Dendritic cell treated with granulocyte-macrophage colony-stimulating factor and Interleukin-4, amounts not matched to agents 40 ng/mL and 50 ng/mL, for 4 days (primary cell): ENCODE measurements at regions of chr10 and their contacts with region 1.

Region 1: DNA sequence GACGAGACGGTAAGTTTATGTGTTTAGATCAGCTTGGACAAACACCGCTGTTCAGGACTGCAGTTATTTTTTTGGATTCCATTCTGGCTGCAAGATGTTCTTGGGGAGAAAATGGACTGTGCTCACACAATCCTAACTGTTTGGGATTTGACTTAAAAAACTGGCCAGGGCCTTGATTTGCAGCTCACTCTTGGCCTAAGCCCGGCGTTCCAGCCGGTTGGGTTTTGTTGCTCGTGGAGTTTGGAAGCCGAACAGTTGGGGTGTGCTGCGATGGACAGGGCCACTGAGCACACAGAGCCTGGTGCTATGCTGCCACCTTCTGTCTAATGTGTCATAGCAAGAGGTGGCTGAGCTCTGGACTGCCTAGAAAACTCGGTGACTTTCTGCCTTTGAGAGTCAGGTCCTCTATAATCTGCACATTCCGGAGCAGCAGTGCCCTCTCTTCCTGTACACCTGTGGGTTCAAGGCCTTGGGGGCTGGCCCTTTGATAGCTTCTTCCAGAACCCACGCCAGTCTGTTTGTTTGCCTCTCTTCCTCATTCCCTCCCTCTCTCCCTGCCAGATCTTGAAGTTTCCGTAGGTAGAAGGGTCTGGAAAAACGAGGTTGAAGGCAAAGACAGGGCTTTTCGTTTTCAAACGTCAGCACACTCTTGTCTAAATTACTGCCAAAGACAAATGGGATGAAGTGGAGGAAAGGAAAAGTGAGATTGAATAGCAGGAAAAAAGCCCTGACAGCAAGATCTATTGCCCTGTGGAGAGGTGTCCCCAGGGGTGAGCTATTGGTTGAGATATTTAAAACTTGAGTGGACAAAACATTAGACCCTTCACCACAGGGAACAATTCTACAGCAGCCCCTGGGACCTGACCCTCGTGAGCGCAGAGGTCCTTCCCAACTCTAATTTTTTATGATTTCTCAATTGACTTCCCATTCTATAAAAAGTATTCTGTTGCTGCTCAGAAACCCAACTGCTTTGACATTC is 167.5 kb upstream of the HABP2 start:
- H3K4me3 Mint-ChIP-seq: no peak overlapping the region
- H3K27ac Mint-ChIP-seq: no peak overlapping the region
- H3K4me1 Mint-ChIP-seq: peaks cover 25% of the 10 kb centered on the region
- H3K27me3 Mint-ChIP-seq: peaks cover 50% of the 10 kb centered on the region

Region 2: GRCh38 chr10:112475575-112476218 is 909.6 kb before region 1 on chr10:
- intact Hi-C with region 1: loop called (anchors 5 kb)
- H3K4me3 Mint-ChIP-seq: no peak overlapping the region
- H3K27ac Mint-ChIP-seq: no peak overlapping the region
- H3K4me1 Mint-ChIP-seq: peaks cover 6% of the 10 kb centered on the region
- H3K27me3 Mint-ChIP-seq: no peaks in the 10 kb centered on the region

Region 3: GRCh38 chr10:112565434-112566053 is 819.8 kb before region 1 on chr10:
- intact Hi-C with region 1: loop called (anchors 2 kb)
- H3K4me3 Mint-ChIP-seq: no peak overlapping the region
- H3K27ac Mint-ChIP-seq: no peak overlapping the region
- H3K4me1 Mint-ChIP-seq: no peaks in the 10 kb centered on the region
- H3K27me3 Mint-ChIP-seq: no peaks in the 10 kb centered on the region

Region 4: DNA sequence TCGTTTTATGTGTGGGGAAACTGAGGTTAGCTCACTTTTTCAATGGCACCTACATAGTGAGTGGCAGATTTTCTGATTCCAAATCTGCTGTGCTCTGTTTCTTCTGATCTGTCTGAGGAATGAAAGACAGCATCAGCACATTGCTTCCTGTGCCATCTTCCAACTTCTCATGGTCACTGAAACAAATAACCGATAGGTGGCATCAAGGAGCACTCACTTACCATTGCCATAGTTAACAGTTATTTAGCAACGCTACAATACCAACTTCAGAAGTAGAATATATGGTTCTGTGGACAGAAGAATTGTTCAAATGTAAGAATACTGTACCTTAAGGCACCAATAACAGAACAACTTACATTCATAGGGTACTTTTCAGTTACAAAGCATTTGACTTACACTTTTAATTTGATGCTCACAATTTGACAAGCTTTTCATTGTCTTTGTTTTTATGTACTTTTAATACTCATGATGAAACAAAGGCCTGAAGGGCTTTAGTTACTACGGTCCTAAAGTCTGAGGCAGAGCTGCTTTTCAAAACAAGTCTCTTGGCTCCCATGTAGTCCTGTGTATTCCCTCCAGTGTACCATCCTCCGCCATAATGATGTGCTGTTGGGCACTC is 664.1 kb before region 1 on chr10:
- intact Hi-C with region 1: loop called (anchors 1 kb)
- H3K4me3 Mint-ChIP-seq: no peak overlapping the region
- H3K27ac Mint-ChIP-seq: no peak overlapping the region
- H3K4me1 Mint-ChIP-seq: no peaks in the 10 kb centered on the region
- H3K27me3 Mint-ChIP-seq: no peaks in the 10 kb centered on the region

Region 5: DNA sequence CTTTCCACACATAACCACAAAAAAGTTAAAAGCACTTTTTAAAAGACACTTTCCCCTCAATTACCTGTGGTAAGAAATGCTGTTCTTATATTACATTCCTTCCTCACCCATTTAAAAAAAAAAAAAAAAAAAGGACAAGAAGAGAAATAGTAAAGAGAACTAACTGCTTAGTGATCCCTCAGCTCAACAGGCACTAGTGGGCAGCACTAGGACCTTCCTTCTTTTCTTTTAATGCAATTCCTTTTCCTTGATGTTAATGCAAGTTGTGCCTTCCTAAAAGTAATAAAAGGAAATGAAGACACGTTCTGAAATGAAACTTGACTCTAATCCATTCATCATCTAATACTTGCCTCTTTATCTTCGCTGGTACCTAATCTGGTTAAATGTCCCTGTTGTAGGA is 245.6 kb before region 1 on chr10:
- intact Hi-C with region 1: loop called (anchors 5 kb)
- H3K4me3 Mint-ChIP-seq: no peak overlapping the region
- H3K27ac Mint-ChIP-seq: no peak overlapping the region
- H3K4me1 Mint-ChIP-seq: peaks cover 25% of the 10 kb centered on the region
- H3K27me3 Mint-ChIP-seq: peaks cover 52% of the 10 kb centered on the region

Region 6: GRCh38 chr10:113273181-113274163 is 111.8 kb before region 1 on chr10:
- intact Hi-C with region 1: no loop called
- H3K4me3 Mint-ChIP-seq: peak overlapping the region; percentile 54
- H3K27ac Mint-ChIP-seq: peak overlapping the region; percentile 75
- H3K4me1 Mint-ChIP-seq: peaks cover 44% of the 10 kb centered on the region
- H3K27me3 Mint-ChIP-seq: peaks cover 45% of the 10 kb centered on the region

Region 7: DNA sequence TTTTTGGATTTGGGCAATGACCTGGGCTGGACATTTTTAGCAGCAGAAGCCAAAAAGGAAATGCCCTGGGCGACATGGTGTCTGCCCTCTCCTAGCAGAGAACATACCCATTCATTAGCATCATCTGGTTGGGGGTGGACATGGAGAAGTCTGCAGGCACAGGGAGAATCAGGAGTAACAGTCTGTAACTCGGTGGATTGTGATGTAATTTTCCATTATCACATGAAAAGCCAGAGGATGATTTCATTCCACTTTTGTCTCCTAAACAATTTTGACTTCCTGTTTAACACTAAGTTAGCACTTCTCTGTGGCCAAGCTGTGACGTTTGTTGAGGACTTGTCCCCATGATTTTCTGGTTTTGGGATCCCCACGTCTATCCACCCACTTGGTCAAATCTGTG is 13.8 kb after region 1 on chr10:
- intact Hi-C with region 1: no loop called
- H3K4me3 Mint-ChIP-seq: no peak overlapping the region
- H3K27ac Mint-ChIP-seq: no peak overlapping the region
- H3K4me1 Mint-ChIP-seq: peaks cover 11% of the 10 kb centered on the region
- H3K27me3 Mint-ChIP-seq: peaks cover 19% of the 10 kb centered on the region

Region 8: GRCh38 chr10:113521123-113521795 is 135.9 kb after region 1 on chr10:
- intact Hi-C with region 1: loop called (anchors 5 kb)
- H3K4me3 Mint-ChIP-seq: no peak overlapping the region
- H3K27ac Mint-ChIP-seq: no peak overlapping the region
- H3K4me1 Mint-ChIP-seq: no peaks in the 10 kb centered on the region
- H3K27me3 Mint-ChIP-seq: peaks cover 24% of the 10 kb centered on the region

Region 9: GRCh38 chr10:113678690-113679462 is 293.6 kb after region 1 on chr10:
- intact Hi-C with region 1: no loop called
- H3K4me3 Mint-ChIP-seq: peak overlapping the region; percentile 88
- H3K27ac Mint-ChIP-seq: peak overlapping the region; percentile 90
- H3K4me1 Mint-ChIP-seq: peaks cover 45% of the 10 kb centered on the region
- H3K27me3 Mint-ChIP-seq: peaks cover 10% of the 10 kb centered on the region